Right ventricle myocardium superior (tissue), 1 donor: ENCODE measurements at regions of chr1 and their contacts with region 1.

Region 1: DNA sequence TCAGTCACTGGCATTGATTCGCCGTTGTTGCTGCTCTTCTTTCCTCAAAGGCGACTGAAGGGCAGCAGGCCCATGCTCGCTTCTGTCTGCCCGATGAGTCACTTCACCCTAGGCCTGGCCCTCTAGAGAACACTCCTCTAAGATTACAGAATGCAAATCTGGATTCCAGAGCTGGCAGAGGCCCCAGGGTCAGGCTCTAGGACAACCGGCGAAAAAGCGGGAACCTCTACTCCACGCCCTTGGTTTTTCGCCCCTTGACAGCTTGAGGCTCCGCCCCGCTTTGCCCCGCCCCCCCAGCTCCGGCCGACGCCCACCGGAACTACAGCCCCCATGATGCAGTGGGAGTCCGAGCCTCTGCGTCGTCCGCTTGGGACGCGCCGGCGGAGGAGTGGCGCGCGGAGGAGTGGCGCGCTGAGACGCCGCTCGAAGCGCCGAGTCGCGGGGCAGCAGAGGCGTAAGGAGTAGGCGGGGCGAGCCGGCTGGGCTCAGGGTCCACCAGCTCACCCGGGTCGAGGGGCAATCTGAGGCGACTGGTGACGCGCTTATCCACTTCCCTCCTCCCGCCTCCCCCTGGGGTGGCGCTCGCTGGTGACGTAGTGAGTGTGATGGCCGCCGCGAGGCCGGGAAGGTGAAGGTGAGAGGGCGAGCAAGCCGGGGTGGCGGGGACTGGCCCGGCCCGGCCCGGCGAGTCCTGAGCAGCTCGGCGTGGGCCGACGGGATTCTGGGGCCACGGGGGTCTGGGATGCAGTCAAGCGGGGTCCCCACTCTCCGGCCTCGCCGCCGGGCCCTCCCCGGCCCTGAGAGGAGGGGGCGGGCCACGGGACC is at the start of gene MFN2:
- DNase-seq: peak; percentile 98
- ATAC-seq: peak; percentile 91
- total RNA-seq, gene MFN2: 648 TPM

Region 2: DNA sequence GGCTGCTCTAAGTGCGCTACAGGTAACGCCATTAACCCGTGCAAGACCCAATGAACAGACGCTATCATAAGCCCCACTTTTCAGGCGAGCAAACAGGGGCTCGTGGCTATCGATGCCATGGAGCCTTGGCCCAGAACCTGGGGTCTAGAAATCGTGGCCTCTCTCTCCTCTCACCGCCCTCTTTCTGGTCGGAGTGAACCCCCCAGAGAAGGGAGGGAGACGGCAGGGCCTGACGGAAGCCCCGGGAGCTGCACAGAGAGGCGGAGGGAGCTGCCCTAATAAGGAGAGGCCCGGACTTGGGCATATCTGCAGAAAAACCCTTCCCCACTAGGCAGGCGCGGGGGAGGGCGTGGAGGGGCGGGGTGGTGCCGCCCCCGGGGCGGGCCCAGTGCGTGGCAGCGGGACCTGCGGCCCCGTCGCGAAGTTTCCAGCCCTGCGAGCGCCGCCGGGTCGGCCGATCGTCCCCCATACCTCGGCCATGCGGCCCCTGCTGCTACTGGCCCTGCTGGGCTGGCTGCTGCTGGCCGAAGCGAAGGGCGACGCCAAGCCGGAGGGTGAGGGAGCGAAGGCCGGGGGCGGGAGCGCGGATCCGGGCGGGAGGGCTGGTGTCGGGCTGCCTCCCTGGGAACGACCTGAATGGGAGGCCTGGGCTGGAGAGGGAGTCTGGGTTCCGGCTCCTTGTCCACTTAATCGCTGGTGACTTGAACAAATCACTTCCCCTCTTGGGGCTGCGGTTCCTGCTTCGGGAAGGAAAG is 45.6 kb before region 1 on chr1 and contains the start of gene PLOD1:
- intact Hi-C with region 1: loop called (anchors 5 kb)
- DNase-seq: peak; percentile 95
- ATAC-seq: peak; percentile 92
- total RNA-seq, gene PLOD1: 66.1 TPM